CD14-positive monocyte (primary cell): ENCODE measurements at regions of chr4 and their contacts with region 1.

Region 1: GRCh38 chr4:109826719-109827118 is 1.1 kb upstream of the RRH start:
- DNase-seq: peak in 1 of 3 donors; percentile 22
- H3K4me3 ChIP-seq: no peak overlapping the region
- H3K4me3 Mint-ChIP-seq: no peak overlapping the region
- H3K27ac ChIP-seq: no peak overlapping the region
- H3K27ac Mint-ChIP-seq: no peak overlapping the region
- H3K4me1 ChIP-seq: no peaks in the 10 kb centered on the region
- H3K4me1 Mint-ChIP-seq: no peaks in the 10 kb centered on the region
- H3K27me3 ChIP-seq: no peaks in the 10 kb centered on the region
- H3K27me3 Mint-ChIP-seq: no peaks in the 10 kb centered on the region
- CTCF ChIP-seq: peak; percentile 68

Region 2: DNA sequence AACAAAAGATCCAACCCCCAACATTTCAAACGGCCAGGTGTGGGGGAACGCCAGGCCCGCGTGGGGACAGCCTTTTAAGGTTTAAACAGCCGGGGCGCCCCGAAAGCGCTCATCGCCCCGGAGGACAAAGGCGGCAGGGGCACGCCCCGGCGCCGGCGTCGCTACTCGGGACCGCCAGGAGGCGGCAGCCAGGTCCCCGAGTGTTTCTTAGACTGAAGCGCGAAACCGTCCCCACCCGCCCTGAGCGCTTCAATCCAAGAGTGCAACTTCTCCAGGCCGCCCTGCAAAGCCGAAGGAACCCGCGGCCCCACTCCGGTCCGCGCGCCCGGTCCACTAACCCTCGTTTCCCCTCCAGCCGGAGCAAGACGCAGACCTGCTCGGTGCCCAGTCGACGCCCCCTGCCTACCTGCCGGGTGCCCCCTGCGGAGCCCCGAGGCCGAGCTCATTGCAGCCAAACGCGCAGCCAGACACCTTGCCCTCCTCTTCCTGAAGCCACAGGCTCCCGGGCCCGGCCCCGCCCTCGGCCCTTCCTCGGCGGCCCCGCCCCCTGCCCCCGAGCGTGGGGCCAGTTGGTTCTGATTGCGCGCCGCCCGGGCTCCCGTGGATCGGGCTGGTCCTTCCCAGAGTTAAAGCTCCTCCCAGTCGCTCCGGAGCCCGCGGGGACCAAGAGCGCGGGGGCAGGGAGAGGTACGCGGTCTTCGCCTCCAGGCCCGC is 123.6 kb before region 1 on chr4 and contains the start of gene CASP6:
- intact Hi-C with region 1: loop called in 1 of 2 experiments (anchors 10 kb)
- DNase-seq: peak; percentile 58 to 63 (median 62)
- H3K4me3 ChIP-seq: peak within 1 kb of the TSS; percentile 52 to 93 (median 68)
- H3K4me3 Mint-ChIP-seq: peak within 1 kb of the TSS; percentile 94 to 97
- H3K27ac ChIP-seq: peak within 1 kb of the TSS; percentile 52 to 69
- H3K27ac Mint-ChIP-seq: peak within 1 kb of the TSS; percentile 77 to 89 (median 83)
- H3K4me1 ChIP-seq: peaks cover 21 to 30% of the 10 kb centered on the region in 2 donors
- H3K4me1 Mint-ChIP-seq: peaks cover 29% of the 10 kb centered on the region
- H3K27me3 ChIP-seq: no peaks in the 10 kb centered on the region
- H3K27me3 Mint-ChIP-seq: peaks cover 0 to 2% (median 2%) of the 10 kb centered on the region in 3 donors
- CTCF ChIP-seq: peak; percentile 77
- polyA plus RNA-seq, gene CASP6: 4.7 to 24.4 (median 23.3) TPM

Region 3: GRCh38 chr4:110071466-110071865 is 244.7 kb after region 1 on chr4:
- intact Hi-C with region 1: no loop called
- DNase-seq: no peak
- H3K4me3 ChIP-seq: no peak overlapping the region
- H3K4me3 Mint-ChIP-seq: no peak overlapping the region
- H3K27ac ChIP-seq: no peak overlapping the region
- H3K27ac Mint-ChIP-seq: no peak overlapping the region
- H3K4me1 ChIP-seq: no peaks in the 10 kb centered on the region
- H3K4me1 Mint-ChIP-seq: peaks cover 8% of the 10 kb centered on the region
- H3K27me3 ChIP-seq: no peaks in the 10 kb centered on the region
- H3K27me3 Mint-ChIP-seq: peaks cover 1 to 5% (median 2%) of the 10 kb centered on the region in 3 donors
- CTCF ChIP-seq: no peak